Posterior vena cava (tissue), 2 donors: ENCODE measurements at regions of chr1 and their contacts with region 1.

Region 1: GRCh38 chr1:47745725-47746597 is 251.2 kb downstream of the TRABD2B start:
- DNase-seq: peak; percentile 17

Region 2: DNA sequence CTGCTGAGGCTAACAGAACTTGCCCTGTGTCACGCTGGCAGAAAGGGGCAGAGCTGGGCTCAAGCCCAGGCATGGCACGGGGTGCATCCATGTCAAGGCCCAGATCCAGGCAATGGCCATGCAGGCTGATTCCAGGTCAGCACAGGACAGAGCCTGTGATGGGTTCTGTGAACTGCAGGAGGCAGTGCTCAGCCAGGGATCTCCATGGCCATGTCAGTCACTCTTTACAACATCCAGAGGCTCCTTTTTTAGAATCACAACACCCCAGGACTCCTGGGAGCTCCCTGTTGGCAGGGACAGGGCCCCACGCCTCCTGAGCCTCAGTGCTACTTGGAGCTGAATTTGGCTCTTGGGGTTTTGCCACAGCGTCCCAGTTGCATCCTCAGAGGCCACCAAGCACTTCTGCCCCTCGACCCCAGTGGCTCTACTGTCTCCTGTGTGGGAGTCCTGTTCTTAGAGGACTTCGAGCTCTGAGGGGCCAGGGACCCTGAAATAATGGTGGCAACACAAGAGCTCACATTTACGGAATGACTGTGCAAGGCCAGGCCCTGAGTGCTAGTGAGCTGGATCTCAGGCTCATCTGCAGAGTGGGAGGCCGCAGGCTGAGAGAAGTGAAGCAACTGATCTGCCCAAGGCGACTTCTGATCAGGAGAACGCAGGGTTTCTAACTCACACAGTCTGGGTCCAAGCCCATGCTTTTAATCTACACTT is 39.8 kb after region 1 on chr1:
- intact Hi-C with region 1: no loop called
- DNase-seq: no peak

Region 3: DNA sequence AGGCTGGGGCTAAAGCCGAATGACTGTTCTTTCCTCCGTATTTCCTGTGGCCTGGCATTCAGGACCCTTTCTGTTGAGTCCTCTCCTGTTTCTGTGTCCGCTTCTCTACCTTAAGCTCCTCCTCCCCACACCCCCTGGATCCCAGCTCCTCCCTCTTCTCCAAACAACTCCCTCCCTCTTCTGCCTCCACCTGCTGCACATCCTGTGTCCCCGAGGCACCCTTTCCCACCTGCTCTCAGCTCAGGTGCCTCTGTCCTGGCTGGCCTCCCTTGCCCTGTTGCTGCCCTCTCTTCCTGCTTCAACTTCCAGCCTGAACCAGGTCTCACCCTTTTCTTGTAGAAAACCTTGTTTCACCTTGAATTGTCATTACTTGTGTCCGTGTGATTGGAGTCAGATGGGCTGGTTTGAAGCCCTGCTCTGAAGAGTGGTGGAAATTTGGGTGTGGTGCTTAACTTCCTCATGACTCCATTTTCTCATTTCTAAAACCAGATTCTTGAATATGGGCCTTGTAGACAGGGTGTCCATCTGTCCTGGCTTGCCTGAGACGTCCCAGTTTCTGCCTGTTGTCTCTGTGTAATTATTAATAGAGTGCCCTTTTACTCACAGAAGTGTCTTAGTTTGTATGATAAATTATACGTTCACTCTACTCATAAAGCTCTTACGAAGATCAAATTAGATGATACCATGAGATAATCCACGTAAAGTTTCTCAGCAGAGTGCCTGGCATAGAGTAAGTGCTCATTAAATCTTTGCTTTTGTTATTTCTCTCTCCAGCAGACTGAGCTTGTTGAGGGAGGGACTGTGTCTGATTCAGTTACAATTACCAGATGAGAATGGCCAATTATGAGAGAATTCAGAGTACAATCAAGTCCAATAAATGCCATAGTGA is 310.2 kb after region 1 on chr1:
- intact Hi-C with region 1: loop called (anchors 10 kb)
- DNase-seq: no peak

Region 4: GRCh38 chr1:48061162-48062136 is 315.5 kb after region 1 on chr1:
- intact Hi-C with region 1: loop called (anchors 10 kb)
- DNase-seq: peak; percentile 3

Region 5: DNA sequence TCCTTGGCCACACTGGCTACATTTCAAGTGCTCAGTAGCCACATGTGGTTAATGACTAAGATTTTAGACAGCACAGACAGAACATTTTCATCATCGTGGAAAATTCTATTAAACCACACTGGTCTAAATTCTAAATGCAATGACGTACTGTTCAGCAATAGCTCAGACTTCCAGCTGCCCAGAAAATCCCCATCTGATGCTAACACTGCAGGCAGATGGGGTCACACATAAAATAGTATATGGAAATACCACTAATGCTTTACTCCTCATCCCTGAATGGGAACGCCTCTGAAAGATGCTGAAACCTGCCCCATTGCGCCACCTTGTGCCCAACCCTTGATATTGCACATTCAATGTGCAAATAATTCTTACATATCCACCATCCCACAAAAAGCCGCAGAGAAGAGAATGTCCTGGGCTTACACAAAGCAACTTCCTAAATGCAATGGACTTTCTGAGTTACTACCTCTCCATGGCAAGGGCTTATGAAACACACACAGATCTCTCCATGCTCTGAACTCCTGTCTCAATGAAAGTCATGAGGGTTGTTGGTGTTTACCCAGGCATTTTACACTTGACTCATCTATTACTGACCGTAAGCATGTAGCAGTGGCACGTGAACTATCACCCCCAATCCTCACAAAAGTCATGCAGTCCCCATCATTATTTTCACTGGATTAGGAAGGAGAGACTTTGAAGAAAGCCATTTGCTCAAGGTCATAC is 456.2 kb after region 1 on chr1:
- intact Hi-C with region 1: loop called in 1 of 2 experiments (anchors 10 kb)
- DNase-seq: peak; percentile 89